Endothelial cell of umbilical vein (primary cell): ENCODE measurements at regions of chr4 and their contacts with region 1.

Region 1: GRCh38 chr4:38730830-38731646 is 51.8 kb downstream of the TLR10 start:
- DNase-seq: peak; percentile 73
- H3K4me3 ChIP-seq: no peak overlapping the region
- H3K27ac ChIP-seq: no peak overlapping the region
- H3K4me1 ChIP-seq: no peaks in the 10 kb centered on the region
- H3K27me3 ChIP-seq: peaks cover 0 to 4% of the 10 kb centered on the region in 2 experiments
- CTCF ChIP-seq: peak; percentile 93 to 96
- POLR2A ChIP-seq: no peak

Region 2: GRCh38 chr4:38062088-38062893 is 668.7 kb before region 1 on chr4:
- CTCF ChIA-PET with region 1: interaction called, 3 read pairs
- POLR2A ChIA-PET with region 1: no interaction called
- dilution Hi-C with region 1: no loop called
- intact Hi-C with region 1: loop called (anchors 1 kb)
- DNase-seq: peak; percentile 82
- H3K4me3 ChIP-seq: peak overlapping the region in 2 of 3 experiments; percentile 8 to 64
- H3K27ac ChIP-seq: no peak overlapping the region
- H3K4me1 ChIP-seq: peaks cover 2% of the 10 kb centered on the region
- H3K27me3 ChIP-seq: no peaks in the 10 kb centered on the region
- CTCF ChIP-seq: peak; percentile 77 to 78
- POLR2A ChIP-seq: no peak

Region 3: DNA sequence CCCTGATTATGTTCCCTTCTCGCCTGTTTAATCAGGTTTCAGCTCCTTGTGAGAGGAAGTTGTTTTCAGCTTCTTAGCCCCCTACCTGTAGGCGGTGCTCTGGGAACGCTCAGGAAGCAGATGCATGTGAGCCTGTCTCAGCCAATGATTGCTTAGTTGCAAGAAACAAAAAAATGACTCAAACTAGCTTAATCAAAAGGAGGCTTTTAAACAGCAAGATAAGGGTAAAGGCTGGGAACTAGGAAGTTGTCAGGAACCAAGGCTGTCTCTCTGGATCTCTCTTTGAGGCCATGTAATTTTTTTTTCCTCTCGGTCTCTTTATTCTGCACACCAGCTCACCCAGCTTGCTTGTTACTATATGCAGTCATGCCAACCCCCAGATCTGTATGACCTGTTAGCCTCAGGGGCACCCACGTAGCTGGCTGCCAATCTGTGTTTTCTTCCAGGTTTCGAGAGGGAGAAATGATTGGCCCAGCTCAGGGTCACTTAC is 661.7 kb before region 1 on chr4:
- CTCF ChIA-PET with region 1: interaction called, 14 read pairs
- POLR2A ChIA-PET with region 1: no interaction called
- dilution Hi-C with region 1: no loop called
- intact Hi-C with region 1: no loop called
- DNase-seq: peak; percentile 38
- H3K4me3 ChIP-seq: no peak overlapping the region
- H3K27ac ChIP-seq: no peak overlapping the region
- H3K4me1 ChIP-seq: peaks cover 10% of the 10 kb centered on the region
- H3K27me3 ChIP-seq: no peaks in the 10 kb centered on the region
- CTCF ChIP-seq: no peak
- POLR2A ChIP-seq: no peak

Region 4: DNA sequence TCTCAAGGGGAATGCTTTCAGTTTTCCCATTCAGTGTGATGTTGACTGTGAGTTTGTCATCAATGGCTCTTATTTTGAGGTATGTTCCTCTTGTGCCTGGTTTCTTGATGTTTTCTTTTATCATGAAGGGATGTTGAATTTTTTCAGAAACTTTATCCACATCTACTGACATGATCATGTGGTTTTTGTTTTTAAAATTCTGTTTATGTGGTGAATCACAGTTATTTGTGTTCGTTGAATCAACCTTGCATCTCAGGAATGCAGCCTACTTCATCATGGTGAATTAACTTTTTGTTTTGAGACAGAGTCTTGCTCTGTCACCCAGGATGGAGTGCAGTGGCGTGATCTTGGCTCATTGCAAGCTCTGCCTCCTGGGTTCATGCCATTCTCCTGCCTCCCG is 330.1 kb before region 1 on chr4:
- CTCF ChIA-PET with region 1: no interaction called
- POLR2A ChIA-PET with region 1: no interaction called
- dilution Hi-C with region 1: no loop called
- intact Hi-C with region 1: no loop called
- DNase-seq: no peak
- H3K4me3 ChIP-seq: no peak overlapping the region
- H3K27ac ChIP-seq: no peak overlapping the region
- H3K4me1 ChIP-seq: no peaks in the 10 kb centered on the region
- H3K27me3 ChIP-seq: peaks cover 0 to 7% of the 10 kb centered on the region in 2 experiments
- CTCF ChIP-seq: no peak
- POLR2A ChIP-seq: no peak

Region 5: GRCh38 chr4:38503689-38504395 is 227.2 kb before region 1 on chr4:
- CTCF ChIA-PET with region 1: no interaction called
- POLR2A ChIA-PET with region 1: no interaction called
- dilution Hi-C with region 1: no loop called
- intact Hi-C with region 1: loop called (anchors 10 kb)
- DNase-seq: no peak
- H3K4me3 ChIP-seq: no peak overlapping the region
- H3K27ac ChIP-seq: no peak overlapping the region
- H3K4me1 ChIP-seq: no peaks in the 10 kb centered on the region
- H3K27me3 ChIP-seq: peaks cover 6 to 13% of the 10 kb centered on the region in 2 experiments
- CTCF ChIP-seq: no peak
- POLR2A ChIP-seq: no peak